ENCODE measurements at regions of chr6 and their contacts with region 1.

Region 1: DNA sequence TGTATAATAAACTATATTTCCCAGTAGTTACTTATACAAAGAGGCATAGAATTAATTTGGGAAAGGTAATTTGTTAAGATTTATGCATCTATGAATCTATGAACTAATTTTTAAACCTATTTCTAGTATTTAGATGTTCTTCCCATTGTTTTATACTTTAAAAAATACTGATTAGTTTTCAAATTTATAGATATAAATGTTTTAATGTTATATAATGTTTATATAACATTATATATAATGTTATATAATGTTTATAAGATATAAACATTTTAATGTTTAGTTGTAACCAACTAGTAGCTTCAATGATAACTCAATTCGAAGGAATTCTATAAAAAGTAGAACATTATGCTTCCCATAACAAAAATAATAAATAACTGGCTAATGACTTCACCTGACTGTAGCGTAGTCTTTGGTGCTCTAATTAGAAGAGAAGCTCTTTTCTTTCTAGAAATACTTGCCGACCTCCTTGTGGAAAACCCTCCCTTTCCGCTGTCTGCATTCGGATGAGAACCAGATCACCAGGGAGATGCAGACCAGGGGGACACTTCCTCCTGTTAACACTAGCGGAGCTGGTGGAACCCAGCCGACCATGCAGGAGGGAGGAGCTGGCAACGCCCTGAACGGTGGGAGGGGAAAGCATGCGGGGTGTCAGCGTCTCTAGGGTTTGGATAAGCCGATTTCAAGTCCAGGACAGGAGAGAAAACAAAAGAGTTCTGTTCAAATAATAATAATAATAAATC is 158.4 kb downstream of the OR2B2 start:
- DNase-seq: peak; percentile 24 to 79 (median 64)
- ATAC-seq: no peak
- H3K4me3 ChIP-seq: peak overlapping the region; percentile 69 to 84
- H3K4me3 Mint-ChIP-seq: peak overlapping the region; percentile 86
- H3K27ac ChIP-seq: peak overlapping the region in 1 of 2 experiments; percentile 25
- H3K27ac Mint-ChIP-seq: peak overlapping the region; percentile 86
- H3K4me1 ChIP-seq: peaks cover 12% of the 10 kb centered on the region
- H3K4me1 Mint-ChIP-seq: peaks cover 34% of the 10 kb centered on the region
- H3K27me3 ChIP-seq: peaks cover 0 to 2% of the 10 kb centered on the region in 2 experiments
- H3K27me3 Mint-ChIP-seq: no peaks in the 10 kb centered on the region
- CTCF ChIP-seq: no peak

Region 2: DNA sequence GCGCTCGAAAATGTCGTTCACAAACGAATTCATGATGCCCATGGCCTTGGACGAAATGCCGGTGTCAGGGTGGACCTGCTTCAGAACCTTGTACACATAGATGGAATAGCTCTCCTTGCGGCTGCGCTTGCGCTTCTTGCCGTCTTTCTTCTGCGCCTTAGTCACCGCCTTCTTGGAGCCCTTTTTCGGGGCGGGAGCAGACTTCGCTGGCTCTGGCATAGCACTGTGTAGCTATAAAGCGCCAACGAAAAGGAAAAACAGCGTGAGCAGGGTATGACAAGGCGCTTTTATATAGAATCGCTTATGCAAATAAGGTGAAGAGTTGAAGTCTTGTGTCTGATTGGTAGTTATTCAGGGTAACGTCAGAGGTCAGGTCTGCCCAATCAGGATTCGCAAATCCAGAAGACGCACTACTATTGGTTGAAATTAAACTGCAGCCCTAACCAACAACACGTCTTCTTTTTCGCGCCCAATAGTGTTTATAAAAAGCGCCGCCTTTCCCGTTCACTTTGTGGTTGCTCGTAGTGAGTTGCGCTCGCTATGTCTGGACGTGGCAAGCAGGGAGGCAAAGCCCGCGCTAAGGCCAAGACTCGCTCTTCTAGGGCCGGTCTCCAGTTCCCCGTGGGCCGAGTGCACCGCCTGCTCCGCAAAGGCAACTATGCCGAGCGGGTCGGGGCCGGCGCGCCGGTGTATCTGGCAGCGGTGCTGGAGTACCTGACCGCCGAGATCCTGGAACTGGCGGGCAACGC is 621.1 kb before region 1 on chr6:
- CTCF ChIA-PET with region 1: no interaction called
- POLR2A ChIA-PET with region 1: interaction called, 5 read pairs
- intact Hi-C with region 1: loop called (anchors 1 kb)
- DNase-seq: peak; percentile 80 to 99 (median 87)
- ATAC-seq: peak; percentile 82
- H3K4me3 ChIP-seq: peak overlapping the region; percentile 76 to 83
- H3K4me3 Mint-ChIP-seq: no peak overlapping the region
- H3K27ac ChIP-seq: peak overlapping the region; percentile 86 to 92
- H3K27ac Mint-ChIP-seq: no peak overlapping the region
- H3K4me1 ChIP-seq: peaks cover 15% of the 10 kb centered on the region
- H3K4me1 Mint-ChIP-seq: peaks cover 21% of the 10 kb centered on the region
- H3K27me3 ChIP-seq: no peaks in the 10 kb centered on the region
- H3K27me3 Mint-ChIP-seq: no peaks in the 10 kb centered on the region
- CTCF ChIP-seq: no peak

Region 3: GRCh38 chr6:27312146-27312949 is 441.5 kb before region 1 on chr6 and contains the start of gene POM121L2:
- CTCF ChIA-PET with region 1: interaction called, 8 read pairs
- POLR2A ChIA-PET with region 1: no interaction called
- intact Hi-C with region 1: loop called (anchors 1 to 2 kb)
- DNase-seq: peak; percentile 28 to 79 (median 52)
- ATAC-seq: peak; percentile 65
- H3K4me3 ChIP-seq: peak within 1 kb of the TSS; percentile 71 to 80
- H3K4me3 Mint-ChIP-seq: peak within 1 kb of the TSS; percentile 81
- H3K27ac ChIP-seq: no peak within 1 kb of the TSS
- H3K27ac Mint-ChIP-seq: no peak within 1 kb of the TSS
- H3K4me1 ChIP-seq: peaks cover 12% of the 10 kb centered on the region
- H3K4me1 Mint-ChIP-seq: peaks cover 10% of the 10 kb centered on the region
- H3K27me3 ChIP-seq: peaks cover 10 to 12% of the 10 kb centered on the region in 2 experiments
- H3K27me3 Mint-ChIP-seq: peaks cover 72% of the 10 kb centered on the region
- CTCF ChIP-seq: peak; percentile 79
- total RNA-seq, gene POM121L2: not detected

Region 4: GRCh38 chr6:27359231-27359630 is 394.6 kb before region 1 on chr6:
- CTCF ChIA-PET with region 1: no interaction called
- POLR2A ChIA-PET with region 1: no interaction called
- intact Hi-C with region 1: no loop called
- DNase-seq: no peak
- ATAC-seq: no peak
- H3K4me3 ChIP-seq: no peak overlapping the region
- H3K4me3 Mint-ChIP-seq: no peak overlapping the region
- H3K27ac ChIP-seq: no peak overlapping the region
- H3K27ac Mint-ChIP-seq: no peak overlapping the region
- H3K4me1 ChIP-seq: no peaks in the 10 kb centered on the region
- H3K4me1 Mint-ChIP-seq: no peaks in the 10 kb centered on the region
- H3K27me3 ChIP-seq: no peaks in the 10 kb centered on the region
- H3K27me3 Mint-ChIP-seq: no peaks in the 10 kb centered on the region
- CTCF ChIP-seq: no peak

Region 5: GRCh38 chr6:27479319-27480182 is 274.3 kb before region 1 on chr6:
- CTCF ChIA-PET with region 1: interaction called, 5 read pairs
- POLR2A ChIA-PET with region 1: interaction called, 22 read pairs
- intact Hi-C with region 1: loop called (anchors 1 kb)
- DNase-seq: peak; percentile 83 to 97 (median 87)
- ATAC-seq: peak; percentile 69
- H3K4me3 ChIP-seq: peak overlapping the region; percentile 79 to 96
- H3K4me3 Mint-ChIP-seq: no peak overlapping the region
- H3K27ac ChIP-seq: peak overlapping the region; percentile 96 to 99
- H3K27ac Mint-ChIP-seq: no peak overlapping the region
- H3K4me1 ChIP-seq: peaks cover 13% of the 10 kb centered on the region
- H3K4me1 Mint-ChIP-seq: peaks cover 9% of the 10 kb centered on the region
- H3K27me3 ChIP-seq: no peaks in the 10 kb centered on the region
- H3K27me3 Mint-ChIP-seq: no peaks in the 10 kb centered on the region
- CTCF ChIP-seq: no peak

Region 6: GRCh38 chr6:27687154-27688013 is 66.5 kb before region 1 on chr6:
- CTCF ChIA-PET with region 1: interaction called, 6 read pairs
- POLR2A ChIA-PET with region 1: no interaction called
- intact Hi-C with region 1: loop called (anchors 1 kb)
- DNase-seq: peak; percentile 58 to 88 (median 74)
- ATAC-seq: peak; percentile 72
- H3K4me3 ChIP-seq: peak overlapping the region; percentile 60 to 74
- H3K4me3 Mint-ChIP-seq: peak overlapping the region; percentile 94
- H3K27ac ChIP-seq: peak overlapping the region; percentile 15 to 55
- H3K27ac Mint-ChIP-seq: peak overlapping the region; percentile 93
- H3K4me1 ChIP-seq: peaks cover 3% of the 10 kb centered on the region
- H3K4me1 Mint-ChIP-seq: peaks cover 18% of the 10 kb centered on the region
- H3K27me3 ChIP-seq: no peaks in the 10 kb centered on the region
- H3K27me3 Mint-ChIP-seq: peaks cover 6% of the 10 kb centered on the region
- CTCF ChIP-seq: peak; percentile 67

Region 7: DNA sequence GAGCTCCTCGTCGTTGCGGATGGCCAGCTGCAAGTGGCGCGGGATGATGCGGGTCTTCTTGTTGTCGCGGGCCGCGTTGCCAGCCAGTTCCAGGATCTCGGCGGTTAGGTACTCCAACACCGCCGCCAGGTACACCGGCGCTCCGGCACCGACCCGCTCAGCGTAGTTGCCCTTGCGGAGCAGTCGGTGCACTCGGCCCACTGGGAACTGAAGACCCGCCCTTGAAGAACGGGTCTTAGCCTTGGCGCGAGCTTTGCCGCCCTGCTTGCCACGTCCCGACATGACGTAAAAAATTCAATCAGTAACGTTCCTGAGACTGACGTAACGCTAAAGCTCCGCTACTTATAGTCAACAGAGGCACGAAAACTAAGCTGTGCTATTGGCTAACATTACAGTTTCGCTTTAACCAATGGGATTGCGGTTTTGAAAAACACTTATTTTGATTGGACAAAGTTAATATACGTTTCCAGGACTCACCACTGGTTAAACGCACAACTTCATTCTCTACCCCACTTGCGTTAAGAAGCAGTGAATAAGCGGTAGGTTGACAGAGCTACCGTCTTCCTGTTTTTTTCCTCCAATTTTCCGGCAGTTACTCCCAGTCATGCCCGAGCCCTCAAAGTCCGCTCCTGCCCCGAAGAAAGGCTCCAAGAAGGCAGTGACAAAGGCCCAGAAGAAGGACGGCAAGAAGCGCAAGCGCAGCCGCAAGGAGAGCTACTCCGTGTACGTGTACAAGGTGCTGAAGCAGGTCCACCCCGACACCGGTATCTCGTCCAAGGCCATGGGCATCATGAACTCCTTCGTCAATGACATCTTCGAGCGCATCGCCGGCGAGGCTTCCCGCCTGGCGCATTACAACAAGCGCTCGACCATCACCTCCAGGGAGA is 84.5 kb after region 1 on chr6:
- CTCF ChIA-PET with region 1: interaction called, 3 read pairs
- POLR2A ChIA-PET with region 1: interaction called, 3 read pairs
- intact Hi-C with region 1: loop called in 1 of 2 experiments (anchors 1 kb)
- DNase-seq: peak; percentile 61 to 98 (median 74)
- ATAC-seq: peak; percentile 70
- H3K4me3 ChIP-seq: peak overlapping the region; percentile 64 to 76
- H3K4me3 Mint-ChIP-seq: no peak overlapping the region
- H3K27ac ChIP-seq: peak overlapping the region; percentile 91 to 98
- H3K27ac Mint-ChIP-seq: no peak overlapping the region
- H3K4me1 ChIP-seq: peaks cover 35% of the 10 kb centered on the region
- H3K4me1 Mint-ChIP-seq: peaks cover 21% of the 10 kb centered on the region
- H3K27me3 ChIP-seq: peaks cover 0 to 4% of the 10 kb centered on the region in 2 experiments
- H3K27me3 Mint-ChIP-seq: peaks cover 7% of the 10 kb centered on the region
- CTCF ChIP-seq: no peak

Region 8: GRCh38 chr6:28981833-28982475 is 1228.1 kb after region 1 on chr6:
- CTCF ChIA-PET with region 1: no interaction called
- POLR2A ChIA-PET with region 1: no interaction called
- intact Hi-C with region 1: loop called in 1 of 2 experiments (anchors 5 kb)
- DNase-seq: peak; percentile 43 to 89 (median 70)
- ATAC-seq: peak; percentile 69
- H3K4me3 ChIP-seq: peak overlapping the region; percentile 94 to 98
- H3K4me3 Mint-ChIP-seq: peak overlapping the region; percentile 89
- H3K27ac ChIP-seq: peak overlapping the region; percentile 14 to 59
- H3K27ac Mint-ChIP-seq: peak overlapping the region; percentile 91
- H3K4me1 ChIP-seq: peaks cover 17% of the 10 kb centered on the region
- H3K4me1 Mint-ChIP-seq: peaks cover 59% of the 10 kb centered on the region
- H3K27me3 ChIP-seq: peaks cover 0 to 6% of the 10 kb centered on the region in 2 experiments
- H3K27me3 Mint-ChIP-seq: peaks cover 34% of the 10 kb centered on the region
- CTCF ChIP-seq: no peak

Measured in CD8-positive, alpha-beta T cell (primary cell).